K562 (cell line): ENCODE measurements at regions of chr2 and their contacts with region 1.

Region 1: DNA sequence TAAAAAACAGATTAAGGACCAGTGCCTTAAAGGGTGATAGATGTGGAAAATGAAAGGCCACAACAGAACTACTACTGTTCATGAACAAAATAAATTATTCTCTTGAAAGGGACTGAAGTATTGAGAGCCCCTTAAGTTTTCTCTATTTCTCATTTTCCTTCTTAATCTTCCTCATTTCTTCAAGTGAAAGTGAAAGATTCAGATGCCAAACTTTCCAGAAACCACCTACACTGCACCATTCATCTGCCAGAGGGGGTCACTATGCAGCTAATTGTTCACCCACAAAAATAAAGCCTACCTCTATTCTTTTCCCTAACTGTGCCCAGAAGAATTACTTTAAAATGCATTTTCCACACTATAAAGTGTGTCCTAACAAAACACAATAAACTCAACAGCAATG is 140.1 kb downstream of the NR4A2 start:
- DNase-seq: no peak
- ATAC-seq: peak; percentile 64; the same call in 2 of the 3 replicates
- H3K4me3 ChIP-seq: no peak overlapping the region
- H3K27ac ChIP-seq: no peak overlapping the region
- H3K4me1 ChIP-seq: no peaks in the 10 kb centered on the region
- H3K27me3 ChIP-seq: no peaks in the 10 kb centered on the region
- CTCF ChIP-seq: peak in 2 of 3 experiments; percentile 4 to 52; a peak in 2 of 6 replicates
- EP300 ChIP-seq: no peak
- POLR2A ChIP-seq: no peak
- RAD21 ChIP-seq: peak; percentile 31 to 55; a peak in 3 of 4 replicates

Region 2: DNA sequence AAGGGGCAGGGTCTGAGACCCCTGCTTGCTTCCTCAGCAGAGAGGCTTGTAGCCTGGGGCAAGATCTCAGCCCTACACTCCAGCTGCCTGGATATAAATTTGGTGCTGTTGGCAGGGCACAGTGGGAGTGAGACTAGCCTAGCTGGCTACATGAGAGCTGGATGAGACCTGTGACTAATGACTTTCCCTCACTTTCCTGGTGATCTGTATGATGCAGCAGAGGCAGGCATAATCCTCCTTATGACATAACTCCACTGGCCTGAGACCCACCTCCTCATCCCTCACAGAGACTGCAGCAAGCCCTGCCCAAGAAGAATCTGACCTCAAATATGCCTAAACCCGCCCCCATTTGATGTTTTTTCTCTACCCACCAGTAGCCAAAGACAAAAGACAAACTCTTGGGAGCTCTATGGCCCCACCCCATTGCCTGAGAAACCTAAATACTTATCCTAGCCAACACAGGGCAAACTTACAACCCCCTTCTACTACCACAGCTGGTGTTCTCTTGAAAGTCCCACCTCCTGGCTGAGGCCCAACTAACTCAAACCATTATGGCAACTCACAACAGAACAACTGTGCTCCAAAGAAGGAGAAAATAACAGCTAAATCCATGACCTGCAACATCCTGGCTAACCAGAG is 37.4 kb after region 1 on chr2:
- CTCF ChIA-PET with region 1: no interaction called
- POLR2A ChIA-PET with region 1: no interaction called
- in situ Hi-C with region 1: no loop called
- intact Hi-C with region 1: no loop called
- DNase-seq: no peak
- ATAC-seq: peak; percentile 39; the same call in 2 of the 3 replicates
- H3K4me3 ChIP-seq: no peak overlapping the region
- H3K27ac ChIP-seq: no peak overlapping the region
- H3K4me1 ChIP-seq: no peaks in the 10 kb centered on the region
- H3K27me3 ChIP-seq: no peaks in the 10 kb centered on the region
- CTCF ChIP-seq: no peak
- EP300 ChIP-seq: no peak
- POLR2A ChIP-seq: no peak
- RAD21 ChIP-seq: no peak

Region 3: GRCh38 chr2:156892467-156893281 is 700.2 kb after region 1 on chr2:
- CTCF ChIA-PET with region 1: no interaction called
- POLR2A ChIA-PET with region 1: no interaction called
- in situ Hi-C with region 1: no loop called
- intact Hi-C with region 1: loop called (anchors 10 kb)
- DNase-seq: peak in 2 of 4 experiments; percentile 35 to 53
- ATAC-seq: peak; percentile 95
- H3K4me3 ChIP-seq: peak overlapping the region; percentile 16
- H3K27ac ChIP-seq: no peak overlapping the region
- H3K4me1 ChIP-seq: no peaks in the 10 kb centered on the region
- H3K27me3 ChIP-seq: no peaks in the 10 kb centered on the region
- CTCF ChIP-seq: peak; percentile 29 to 64 (median 61); a peak in 5 of 6 replicates
- EP300 ChIP-seq: no peak
- POLR2A ChIP-seq: no peak
- RAD21 ChIP-seq: peak; percentile 83 to 87